ENCODE measurements at regions of chr17 and their contacts with region 1.

Region 1: GRCh38 chr17:81854974-81855774 is 5.2 kb downstream of the P4HB start:
- DNase-seq: no peak
- H3K4me3 ChIP-seq: no peak overlapping the region
- H3K27ac ChIP-seq: no peak overlapping the region
- H3K4me1 ChIP-seq: peaks cover 0 to 5% (median 5%) of the 10 kb centered on the region in 4 experiments; a peak in 5 of 7 replicates
- H3K27me3 ChIP-seq: no peaks in the 10 kb centered on the region; a peak in 1 of 7 replicates
- CTCF ChIP-seq: peak in 1 of 3 experiments; percentile 38; a peak in 2 of 4 replicates
- EP300 ChIP-seq: no peak
- POLR2A ChIP-seq: no peak
- RAD21 ChIP-seq: peak; percentile 51 to 60

Region 2: DNA sequence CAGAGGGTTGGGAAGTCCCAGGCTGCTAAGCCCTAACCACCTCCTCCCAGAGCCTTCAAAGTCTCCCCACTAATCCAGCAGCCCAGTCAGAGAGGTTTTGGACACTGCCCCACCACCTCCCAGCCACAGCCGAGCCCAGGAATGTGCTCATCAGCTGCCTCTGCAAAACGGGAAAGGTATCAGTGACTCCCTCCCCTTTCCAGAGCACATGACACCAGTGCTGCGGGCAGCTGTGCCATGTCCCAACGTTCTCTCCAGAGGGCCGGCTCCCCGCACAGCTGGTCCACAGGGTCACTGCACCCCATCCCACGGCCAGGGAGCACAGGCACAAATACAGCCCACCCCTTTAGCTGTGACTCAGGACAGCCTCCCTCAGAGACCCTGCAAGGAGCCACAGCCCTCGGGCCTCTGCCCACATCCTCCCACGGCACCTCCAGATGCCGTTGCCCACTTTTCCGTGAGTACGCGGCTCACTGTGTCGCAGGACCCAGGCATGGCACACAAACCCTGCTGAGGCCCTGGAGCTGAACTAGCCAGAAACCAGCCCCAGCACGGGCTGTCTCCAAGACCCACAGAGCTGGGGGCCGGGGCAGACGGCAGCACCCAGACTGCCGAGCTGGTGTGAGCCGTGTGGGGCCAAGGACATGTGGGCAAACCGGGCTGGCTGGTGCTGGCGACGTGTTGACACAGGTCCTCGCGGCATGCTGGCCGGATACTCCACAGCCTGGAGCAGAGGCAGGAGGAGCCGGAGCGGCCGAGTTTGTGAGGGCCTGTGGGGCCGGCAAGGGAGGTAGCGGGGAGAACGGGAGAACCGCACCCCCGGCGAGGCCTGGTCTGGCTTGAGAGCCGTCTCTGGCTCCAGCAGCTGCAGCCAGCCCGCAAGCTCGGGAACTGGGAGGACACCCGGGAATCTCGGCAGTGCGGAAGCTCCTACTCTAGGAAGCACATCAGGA is 14.1 kb before region 1 on chr17:
- CTCF ChIA-PET with region 1: interaction called, 8 read pairs
- POLR2A ChIA-PET with region 1: interaction called, 17 read pairs
- DNase-seq: no peak
- H3K4me3 ChIP-seq: no peak overlapping the region
- H3K27ac ChIP-seq: 0 out of 2 replicates have a peak overlapping the region, but pooled peaks have one; percentile 2
- H3K4me1 ChIP-seq: peaks cover 0 to 3% (median 0%) of the 10 kb centered on the region in 4 experiments; a peak in 2 of 7 replicates
- H3K27me3 ChIP-seq: no peaks in the 10 kb centered on the region; a peak in 2 of 7 replicates
- CTCF ChIP-seq: no peak
- EP300 ChIP-seq: no peak
- POLR2A ChIP-seq: no peak
- RAD21 ChIP-seq: no peak

Region 3: DNA sequence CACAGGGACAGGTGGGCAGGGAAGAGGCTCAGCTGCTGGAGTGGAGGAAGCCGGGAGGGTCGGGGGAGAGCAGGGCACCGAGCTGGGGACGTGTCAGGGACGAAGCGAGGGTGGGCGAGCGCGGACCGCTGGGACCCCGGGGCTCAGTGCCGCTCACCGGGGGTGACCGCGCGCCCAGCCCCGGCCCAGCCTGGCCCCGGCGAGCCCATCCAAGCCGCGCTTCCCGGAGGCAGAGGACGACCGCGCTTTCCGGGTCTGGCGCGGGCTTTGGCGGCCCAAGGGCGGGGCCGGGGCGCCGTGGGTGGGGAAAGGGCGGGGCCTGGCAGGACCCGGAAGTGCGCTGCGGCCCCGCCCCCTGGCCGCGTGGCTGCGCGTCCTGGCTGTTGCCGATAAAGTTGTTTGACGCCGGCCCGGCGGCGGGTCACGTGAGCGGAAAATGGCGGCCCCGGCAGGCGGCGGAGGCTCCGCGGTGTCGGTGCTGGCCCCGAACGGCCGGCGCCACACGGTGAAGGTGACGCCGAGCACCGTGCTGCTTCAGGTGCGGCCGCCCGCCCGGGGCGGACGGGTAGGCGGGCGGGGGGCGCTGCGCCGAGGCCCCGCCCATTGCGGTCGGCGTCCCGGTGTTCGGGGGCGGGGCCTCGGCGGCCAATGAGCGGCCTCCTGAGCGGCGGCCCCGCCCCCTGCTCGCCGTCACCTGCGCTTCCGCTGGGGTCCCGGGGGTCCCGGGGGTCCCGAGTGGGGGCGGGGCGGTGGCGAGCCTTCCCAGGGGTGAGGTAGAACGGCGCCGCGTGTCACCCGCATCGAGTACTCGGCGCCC is 122.2 kb after region 1 on chr17 and contains the start of gene ASPSCR1:
- CTCF ChIA-PET with region 1: no interaction called
- POLR2A ChIA-PET with region 1: no interaction called
- DNase-seq: peak; percentile 57 to 93
- H3K4me3 ChIP-seq: peak within 1 kb of the TSS; percentile 62 to 88 (median 82)
- H3K27ac ChIP-seq: peak within 1 kb of the TSS; percentile 83
- H3K4me1 ChIP-seq: peaks cover 0 to 7% (median 6%) of the 10 kb centered on the region in 4 experiments; a peak in 5 of 7 replicates
- H3K27me3 ChIP-seq: peaks cover 0 to 19% (median 12%) of the 10 kb centered on the region in 4 experiments; a peak in 5 of 7 replicates
- CTCF ChIP-seq: no peak
- EP300 ChIP-seq: peak in 1 of 2 experiments; percentile 73; a peak in 1 of 3 replicates
- POLR2A ChIP-seq: peak in 1 of 2 experiments; percentile 81; a peak in 2 of 3 replicates
- RAD21 ChIP-seq: no peak
- total RNA-seq, gene ASPSCR1: 41.8 and 43.7 TPM in 2 replicates